ENCODE measurements at regions of chr2 and their contacts with region 1.

Region 1: GRCh38 chr2:177489719-177490301 is 97.2 kb downstream of the AGPS start:
- DNase-seq: no peak
- ATAC-seq: no peak

Region 2: GRCh38 chr2:177392373-177393202 is 97.2 kb before region 1 on chr2 and contains the start of gene AGPS:
- intact Hi-C with region 1: no loop called
- DNase-seq: peak; percentile 95
- ATAC-seq: peak; percentile 96
- total RNA-seq, gene AGPS: 32.3 TPM

Region 3: DNA sequence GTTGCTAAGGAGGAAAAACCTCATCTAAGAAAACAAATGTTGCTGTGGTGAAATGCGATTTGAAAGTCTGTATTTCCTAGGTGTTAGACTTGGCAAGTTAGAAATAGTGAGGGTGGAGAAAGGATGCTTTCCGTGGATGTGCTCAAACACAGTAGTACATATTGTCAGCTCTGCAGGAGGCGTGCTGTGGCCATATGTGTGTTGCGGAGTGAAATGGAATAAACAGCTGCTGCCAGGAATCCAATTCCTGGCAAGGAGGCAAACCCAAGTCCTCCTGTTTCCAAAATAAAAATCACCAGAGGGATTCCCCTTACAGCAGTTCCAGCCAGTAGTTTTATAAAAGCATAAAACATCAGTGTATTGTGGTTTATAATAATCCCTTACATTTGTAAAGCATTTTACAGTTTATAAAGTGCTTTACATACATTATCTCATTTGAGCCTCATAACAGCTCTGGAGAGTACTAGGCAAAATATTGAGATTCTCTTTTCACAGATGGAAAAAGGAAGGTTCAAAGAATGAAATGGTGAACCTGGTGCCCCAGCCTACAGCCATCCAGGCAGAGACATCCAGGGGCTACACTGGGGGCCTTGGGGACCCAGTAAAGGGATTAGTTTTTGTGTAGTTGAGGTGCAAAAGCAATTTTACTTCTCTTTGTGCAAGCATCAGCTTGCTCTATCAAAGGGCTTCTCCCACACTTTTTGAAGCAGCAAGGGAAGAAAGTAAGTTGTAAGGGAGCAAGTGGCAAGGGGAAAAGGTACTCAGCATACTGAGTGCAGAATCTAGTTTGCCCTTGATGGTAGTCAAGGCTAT is 108.7 kb after region 1 on chr2:
- intact Hi-C with region 1: loop called (anchors 5 kb)
- DNase-seq: no peak
- ATAC-seq: peak; percentile 82

Region 4: DNA sequence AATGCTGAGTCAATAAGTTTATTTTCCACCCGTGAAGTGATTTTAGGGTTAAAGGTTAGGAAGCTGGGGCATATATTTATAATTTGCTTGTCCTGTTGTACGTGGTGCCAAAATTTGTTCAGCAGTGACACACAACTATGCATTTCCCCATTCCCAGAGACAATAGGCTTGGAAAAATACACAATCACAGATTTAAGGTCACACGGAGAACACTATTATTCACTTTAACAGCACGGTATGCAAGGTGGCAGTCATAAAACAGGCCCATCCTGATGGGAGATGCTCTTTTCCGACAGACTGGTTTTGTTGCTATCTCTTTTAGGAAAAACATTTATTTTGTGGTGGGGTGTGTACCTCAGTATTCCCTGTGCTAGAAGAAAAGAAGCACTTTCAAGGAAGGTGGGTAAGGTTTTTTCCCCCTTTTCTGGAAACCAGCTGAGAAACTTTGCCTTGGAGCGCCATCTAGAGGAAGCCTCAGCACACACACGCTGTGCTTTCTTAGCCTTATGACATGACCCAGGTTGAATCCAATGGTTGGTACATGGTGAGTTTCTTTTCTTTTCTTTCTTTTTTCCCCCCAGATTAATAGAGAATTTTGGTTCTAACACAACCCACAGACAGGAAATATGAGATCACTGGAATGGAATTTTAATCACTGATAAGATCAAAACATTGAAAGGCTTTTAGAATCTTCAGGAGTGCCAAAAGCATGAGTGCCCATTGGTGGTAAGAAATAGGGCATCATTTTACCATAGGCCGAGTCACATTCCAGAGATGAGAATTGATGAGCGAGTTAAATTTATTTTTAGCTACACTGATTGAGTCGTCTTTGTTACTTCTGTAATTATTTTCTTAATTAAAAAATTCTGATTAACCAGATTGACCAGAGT is 234.8 kb after region 1 on chr2:
- intact Hi-C with region 1: loop called (anchors 5 kb)
- DNase-seq: no peak
- ATAC-seq: peak; percentile 63

Region 5: DNA sequence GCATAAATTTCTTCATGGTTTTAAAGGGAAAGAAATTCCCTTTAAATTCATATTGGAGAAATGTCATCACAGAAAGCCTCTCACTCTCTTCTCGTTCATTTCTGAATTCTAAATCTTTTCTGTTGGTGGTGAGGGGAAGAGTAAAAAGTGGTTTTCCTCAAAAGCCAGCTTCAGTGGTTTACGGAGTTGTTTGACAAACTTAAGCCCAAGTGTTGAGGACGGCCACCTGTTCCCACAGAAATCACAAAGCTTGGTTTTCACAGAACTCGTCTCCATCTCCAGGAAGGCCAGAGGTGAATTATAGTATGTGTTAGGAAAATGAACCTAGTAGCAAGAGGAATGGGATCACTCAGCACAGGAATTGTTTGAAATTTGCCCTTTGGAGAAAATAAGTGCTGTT is 266.5 kb after region 1 on chr2:
- intact Hi-C with region 1: loop called (anchors 2 kb)
- DNase-seq: no peak
- ATAC-seq: no peak